ENCODE measurements at regions of chr16 and their contacts with region 1.

Region 1: GRCh38 chr16:86343027-86343787 is 167.1 kb upstream of the FOXF1 start:
- DNase-seq: no peak
- H3K4me3 ChIP-seq: no peak overlapping the region
- CTCF ChIP-seq: no peak

Region 2: GRCh38 chr16:86294535-86295196 is 48.5 kb before region 1 on chr16:
- in situ Hi-C with region 1: no loop called
- DNase-seq: no peak
- H3K4me3 ChIP-seq: no peak overlapping the region
- CTCF ChIP-seq: no peak

Region 3: DNA sequence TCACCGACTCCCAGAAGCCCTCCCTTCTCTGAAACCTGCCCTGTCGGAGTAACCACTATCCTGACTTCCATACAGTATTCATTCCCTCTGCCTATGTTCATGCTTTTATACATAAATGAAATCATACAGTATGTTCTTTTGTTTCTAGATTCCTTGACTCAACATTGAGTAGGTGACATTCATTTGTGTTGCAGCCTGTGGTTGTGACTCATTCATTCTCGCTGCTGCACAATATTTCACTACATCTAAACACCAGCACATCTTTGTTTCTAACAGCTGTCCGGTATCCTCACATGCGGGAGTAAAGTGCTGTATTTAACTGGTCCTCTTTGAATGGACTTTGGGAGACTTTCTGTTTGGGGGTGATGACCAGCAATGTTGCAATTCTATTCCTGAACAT is 32.2 kb after region 1 on chr16:
- in situ Hi-C with region 1: no loop called
- DNase-seq: no peak
- H3K4me3 ChIP-seq: no peak overlapping the region
- CTCF ChIP-seq: no peak

Region 4: GRCh38 chr16:86396897-86397296 is 53.7 kb after region 1 on chr16:
- in situ Hi-C with region 1: loop called (anchors 10 kb)
- DNase-seq: peak; percentile 77
- H3K4me3 ChIP-seq: peak overlapping the region; percentile 25
- CTCF ChIP-seq: no peak

Region 5: GRCh38 chr16:86410076-86410475 is 66.9 kb after region 1 on chr16:
- in situ Hi-C with region 1: no loop called
- DNase-seq: no peak
- H3K4me3 ChIP-seq: no peak overlapping the region
- CTCF ChIP-seq: no peak

Region 6: GRCh38 chr16:86519649-86520316 is 176.6 kb after region 1 on chr16:
- in situ Hi-C with region 1: loop called (anchors 5 kb)
- DNase-seq: no peak
- H3K4me3 ChIP-seq: no peak overlapping the region
- CTCF ChIP-seq: peak; percentile 91